Caco-2 (cell line): ENCODE measurements at regions of chr6 and their contacts with region 1.

Region 1: DNA sequence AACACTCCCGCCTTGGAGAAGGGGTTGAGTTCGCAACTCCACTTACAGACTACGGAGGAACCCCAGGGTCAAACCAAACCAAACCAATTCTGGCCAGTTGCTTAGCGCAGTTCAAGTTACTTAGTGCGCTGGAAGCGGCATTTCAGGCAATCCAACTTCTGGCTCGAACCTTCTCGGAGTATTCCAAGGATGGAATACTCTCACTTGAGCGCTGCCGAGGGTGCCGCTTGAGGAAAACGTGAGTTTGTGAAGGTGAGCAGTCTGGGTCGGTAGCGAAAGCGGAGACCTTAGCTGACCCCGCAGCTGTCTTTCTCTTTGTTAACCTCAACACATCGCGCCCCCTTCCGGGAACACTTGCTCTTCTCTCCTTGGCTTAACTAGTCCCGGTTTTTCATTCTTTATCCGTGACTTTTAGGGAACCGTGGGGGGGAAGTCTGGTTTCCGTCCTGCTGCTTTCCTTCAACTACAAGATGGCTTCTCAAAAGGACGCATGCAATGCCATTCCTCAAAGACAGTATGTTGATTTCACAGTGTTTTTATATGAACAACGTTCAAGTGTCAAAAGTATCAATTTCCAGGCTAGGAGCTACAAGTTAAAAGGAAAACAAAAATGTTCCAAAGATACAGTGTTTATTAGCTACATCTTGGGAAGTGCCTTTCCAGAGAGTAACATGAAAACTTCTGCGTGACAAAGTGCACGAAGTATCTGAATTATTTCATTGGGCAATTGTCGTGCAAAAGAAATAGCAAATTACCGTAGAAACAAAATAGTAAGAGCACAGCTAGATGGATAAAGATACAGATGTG is 742 bp upstream of the PNISR start:
- DNase-seq: peak; percentile 89 to 91
- H3K4me3 ChIP-seq: peak overlapping the region; percentile 66
- H3K4me3 Mint-ChIP-seq: peak overlapping the region; percentile 97
- H3K27ac Mint-ChIP-seq: peak overlapping the region; percentile 99
- H3K4me1 ChIP-seq: peaks cover 13% of the 10 kb centered on the region
- H3K4me1 Mint-ChIP-seq: peaks cover 8% of the 10 kb centered on the region
- H3K27me3 ChIP-seq: no peaks in the 10 kb centered on the region
- H3K27me3 Mint-ChIP-seq: no peaks in the 10 kb centered on the region
- CTCF ChIP-seq: peak; percentile 28 to 69

Region 2: GRCh38 chr6:98824162-98824906 is 601.5 kb before region 1 on chr6:
- CTCF ChIA-PET with region 1: no interaction called
- POLR2A ChIA-PET with region 1: no interaction called
- intact Hi-C with region 1: no loop called
- DNase-seq: no peak
- H3K4me3 ChIP-seq: no peak overlapping the region
- H3K4me3 Mint-ChIP-seq: peak overlapping the region; percentile 18
- H3K27ac Mint-ChIP-seq: no peak overlapping the region
- H3K4me1 ChIP-seq: no peaks in the 10 kb centered on the region
- H3K4me1 Mint-ChIP-seq: no peaks in the 10 kb centered on the region
- H3K27me3 ChIP-seq: peaks cover 2% of the 10 kb centered on the region; the same call in 1 of the 2 replicates
- H3K27me3 Mint-ChIP-seq: peaks cover 36% of the 10 kb centered on the region
- CTCF ChIP-seq: no peak

Region 3: DNA sequence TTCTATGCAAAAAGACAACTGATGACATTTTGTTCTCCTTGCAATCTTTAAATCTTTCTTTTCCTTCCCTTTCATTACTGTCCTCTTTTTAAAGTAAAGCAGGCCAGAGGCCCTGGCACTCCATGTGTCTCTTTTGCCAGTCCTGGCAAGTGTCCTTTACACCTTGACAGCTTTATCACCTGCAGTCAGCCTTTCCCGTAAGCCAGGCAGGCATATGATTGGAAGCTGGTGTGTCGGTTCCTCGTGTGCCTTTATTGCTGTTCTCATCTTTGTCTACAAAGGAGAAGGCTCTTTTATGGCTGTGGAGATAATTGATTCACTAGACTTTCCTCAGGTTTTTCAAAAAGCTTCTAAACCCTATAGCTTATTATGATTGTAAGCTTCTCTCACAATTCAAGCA is 315.8 kb before region 1 on chr6:
- CTCF ChIA-PET with region 1: no interaction called
- POLR2A ChIA-PET with region 1: no interaction called
- intact Hi-C with region 1: no loop called
- DNase-seq: no peak
- H3K4me3 ChIP-seq: no peak overlapping the region
- H3K4me3 Mint-ChIP-seq: no peak overlapping the region
- H3K27ac Mint-ChIP-seq: no peak overlapping the region
- H3K4me1 ChIP-seq: no peaks in the 10 kb centered on the region
- H3K4me1 Mint-ChIP-seq: no peaks in the 10 kb centered on the region
- H3K27me3 ChIP-seq: no peaks in the 10 kb centered on the region
- H3K27me3 Mint-ChIP-seq: peaks cover 9% of the 10 kb centered on the region
- CTCF ChIP-seq: no peak

Region 4: DNA sequence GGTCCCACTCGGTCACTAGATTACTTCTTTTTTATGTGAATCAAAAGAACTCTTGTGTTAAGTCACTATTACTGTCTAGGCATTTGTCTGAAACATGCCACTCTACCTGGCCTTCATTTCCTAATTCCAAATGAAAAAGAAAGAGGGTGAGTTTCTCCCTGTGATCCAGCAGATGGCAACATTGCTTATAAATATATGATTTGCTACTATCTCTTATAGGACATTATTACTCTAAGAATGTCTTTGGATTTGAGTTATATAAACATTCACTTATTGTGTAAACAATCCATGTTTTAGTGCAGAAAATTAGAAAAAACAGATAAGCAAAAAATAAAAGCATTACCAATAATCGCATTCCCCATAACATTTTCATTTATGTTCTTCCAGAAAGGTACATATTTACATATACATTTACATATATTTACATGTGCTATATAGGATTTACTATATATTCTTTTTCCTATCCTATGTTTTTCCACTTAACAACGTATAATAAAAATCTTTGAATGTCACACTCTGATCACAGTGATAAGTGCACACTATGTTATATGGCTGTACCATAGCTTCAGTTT is 143.3 kb before region 1 on chr6:
- CTCF ChIA-PET with region 1: no interaction called
- POLR2A ChIA-PET with region 1: no interaction called
- intact Hi-C with region 1: loop called (anchors 5 kb)
- DNase-seq: no peak
- H3K4me3 ChIP-seq: no peak overlapping the region
- H3K4me3 Mint-ChIP-seq: no peak overlapping the region
- H3K27ac Mint-ChIP-seq: no peak overlapping the region
- H3K4me1 ChIP-seq: no peaks in the 10 kb centered on the region
- H3K4me1 Mint-ChIP-seq: no peaks in the 10 kb centered on the region
- H3K27me3 ChIP-seq: no peaks in the 10 kb centered on the region
- H3K27me3 Mint-ChIP-seq: peaks cover 4% of the 10 kb centered on the region
- CTCF ChIP-seq: peak; percentile 29 to 51

Region 5: GRCh38 chr6:99330159-99330558 is 95.7 kb before region 1 on chr6:
- CTCF ChIA-PET with region 1: interaction called, 8 read pairs
- POLR2A ChIA-PET with region 1: no interaction called
- intact Hi-C with region 1: loop called (anchors 1 kb)
- DNase-seq: peak in 1 of 2 experiments; percentile 53
- H3K4me3 ChIP-seq: no peak overlapping the region
- H3K4me3 Mint-ChIP-seq: no peak overlapping the region
- H3K27ac Mint-ChIP-seq: no peak overlapping the region
- H3K4me1 ChIP-seq: no peaks in the 10 kb centered on the region
- H3K4me1 Mint-ChIP-seq: no peaks in the 10 kb centered on the region
- H3K27me3 ChIP-seq: no peaks in the 10 kb centered on the region
- H3K27me3 Mint-ChIP-seq: no peaks in the 10 kb centered on the region
- CTCF ChIP-seq: peak; percentile 49 to 66

Region 6: GRCh38 chr6:99393698-99394531 is 31.9 kb before region 1 on chr6 and contains the start of gene COQ3:
- CTCF ChIA-PET with region 1: interaction called, 5 read pairs
- POLR2A ChIA-PET with region 1: interaction called, 17 read pairs
- intact Hi-C with region 1: loop called (anchors 1 kb)
- DNase-seq: peak; percentile 88
- H3K4me3 ChIP-seq: peak within 1 kb of the TSS; percentile 68
- H3K4me3 Mint-ChIP-seq: peak within 1 kb of the TSS; percentile 90
- H3K27ac Mint-ChIP-seq: peak within 1 kb of the TSS; percentile 92
- H3K4me1 ChIP-seq: no peaks in the 10 kb centered on the region
- H3K4me1 Mint-ChIP-seq: no peaks in the 10 kb centered on the region
- H3K27me3 ChIP-seq: no peaks in the 10 kb centered on the region
- H3K27me3 Mint-ChIP-seq: no peaks in the 10 kb centered on the region
- CTCF ChIP-seq: no peak
- total RNA-seq, gene COQ3: 5.8 and 6.4 TPM in 2 replicates

Region 7: GRCh38 chr6:99514089-99514488 is 88.2 kb after region 1 on chr6:
- CTCF ChIA-PET with region 1: no interaction called
- POLR2A ChIA-PET with region 1: no interaction called
- intact Hi-C with region 1: loop called (anchors 1 kb)
- DNase-seq: no peak
- H3K4me3 ChIP-seq: peak overlapping the region; percentile 62
- H3K4me3 Mint-ChIP-seq: peak overlapping the region; percentile 91
- H3K27ac Mint-ChIP-seq: no peak overlapping the region
- H3K4me1 ChIP-seq: no peaks in the 10 kb centered on the region
- H3K4me1 Mint-ChIP-seq: peaks cover 8% of the 10 kb centered on the region
- H3K27me3 ChIP-seq: no peaks in the 10 kb centered on the region
- H3K27me3 Mint-ChIP-seq: no peaks in the 10 kb centered on the region
- CTCF ChIP-seq: no peak

Region 8: GRCh38 chr6:99568103-99568933 is 142.5 kb after region 1 on chr6 and contains the start of gene CCNC:
- CTCF ChIA-PET with region 1: no interaction called
- POLR2A ChIA-PET with region 1: interaction called, 4 read pairs
- intact Hi-C with region 1: loop called (anchors 1 kb)
- DNase-seq: peak; percentile 96 to 97
- H3K4me3 ChIP-seq: peak within 1 kb of the TSS; percentile 70
- H3K4me3 Mint-ChIP-seq: peak within 1 kb of the TSS; percentile 96
- H3K27ac Mint-ChIP-seq: peak within 1 kb of the TSS; percentile 100
- H3K4me1 ChIP-seq: peaks cover 5% of the 10 kb centered on the region
- H3K4me1 Mint-ChIP-seq: peaks cover 10% of the 10 kb centered on the region
- H3K27me3 ChIP-seq: no peaks in the 10 kb centered on the region
- H3K27me3 Mint-ChIP-seq: no peaks in the 10 kb centered on the region
- CTCF ChIP-seq: no peak
- total RNA-seq, gene CCNC: 93.1 and 94.6 TPM in 2 replicates